ENCODE measurements at regions of chr19 and their contacts with region 1.

Region 1: DNA sequence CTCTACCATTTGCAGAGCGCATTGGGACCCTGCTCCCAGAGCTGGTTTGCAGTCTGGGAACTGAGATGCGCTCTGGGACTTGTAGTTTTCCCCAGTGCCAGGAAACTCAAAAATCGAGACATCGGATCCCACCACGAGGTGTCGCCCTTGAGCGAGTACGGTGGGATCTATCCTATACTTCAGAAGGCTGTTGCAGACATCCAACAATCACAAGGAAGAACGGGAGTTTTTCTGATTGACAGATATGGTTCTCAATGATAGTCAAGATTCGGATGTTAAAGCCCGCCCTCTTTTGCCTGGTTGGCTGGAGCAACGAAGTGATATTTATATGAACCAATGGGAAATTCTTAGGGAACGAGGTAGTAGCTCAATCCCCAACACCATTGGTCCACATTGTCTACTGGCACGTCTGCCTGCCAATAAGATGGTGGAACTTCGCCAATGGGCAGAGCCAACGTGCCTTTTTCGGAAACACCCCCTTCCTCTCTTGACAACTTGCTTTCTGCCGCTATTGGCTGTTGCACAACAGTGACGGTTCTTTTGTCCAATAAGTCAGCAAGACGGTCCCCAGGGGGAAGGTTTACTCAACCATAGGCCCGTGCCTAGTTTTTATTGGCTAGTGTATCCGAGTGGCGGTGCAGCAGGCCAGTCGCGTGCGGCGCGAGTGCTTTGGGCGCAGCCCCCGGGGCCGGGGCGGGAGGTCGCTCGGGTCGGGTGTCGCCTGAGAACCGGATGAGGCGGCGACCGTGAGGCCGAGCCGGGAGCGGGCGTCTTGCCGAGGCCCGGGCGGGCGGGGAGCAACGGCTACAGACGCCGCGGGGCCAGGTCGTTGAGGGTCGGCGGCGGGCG is at the start of gene DNM2:
- DNase-seq: peak; percentile 99
- ATAC-seq: peak; percentile 94
- H3K4me3 ChIP-seq: peak within 1 kb of the TSS; percentile 96
- H3K27ac ChIP-seq: peak within 1 kb of the TSS; percentile 96
- H3K4me1 ChIP-seq: peaks cover 28% of the 10 kb centered on the region
- H3K27me3 ChIP-seq: no peaks in the 10 kb centered on the region
- CTCF ChIP-seq: peak; percentile 86
- total RNA-seq, gene DNM2: 280 TPM

Region 2: DNA sequence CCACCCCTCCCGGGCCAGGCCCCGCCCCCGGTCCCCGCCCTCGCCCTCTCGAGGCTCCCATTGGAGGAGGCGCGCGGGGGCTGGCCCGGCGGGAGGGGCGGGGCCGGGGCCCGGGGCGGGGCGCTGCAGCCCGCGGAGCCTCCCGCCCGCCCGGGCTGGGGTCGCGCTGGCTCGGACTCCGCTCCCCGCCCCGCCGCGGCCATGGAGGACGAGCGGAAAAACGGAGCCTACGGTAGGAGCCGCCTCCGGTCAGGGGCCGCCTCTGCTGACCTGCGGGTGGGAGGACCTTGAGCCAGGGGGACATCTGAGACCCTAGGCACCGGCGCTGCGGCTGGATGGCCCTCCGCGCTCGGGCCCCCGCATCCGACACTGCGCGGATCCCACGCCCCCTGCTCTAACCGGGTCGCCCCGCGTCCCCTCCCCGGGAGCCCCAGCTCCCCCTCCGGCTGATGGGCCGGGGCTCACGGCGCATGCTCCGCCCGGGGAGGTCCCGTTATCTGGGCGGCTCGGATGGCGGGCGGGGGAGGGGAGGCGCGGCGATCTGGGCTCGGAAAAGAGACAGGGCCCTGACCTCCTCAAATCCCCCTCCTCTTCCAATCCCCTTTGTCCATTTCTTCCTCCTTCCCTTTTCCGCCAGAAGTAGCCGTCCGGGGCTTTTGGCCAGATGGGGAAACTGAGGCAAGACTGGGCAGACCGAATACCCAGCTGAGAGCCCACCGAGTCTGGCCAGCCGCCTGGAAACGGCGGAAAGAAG is 115.1 kb before region 1 on chr19:
- intact Hi-C with region 1: no loop called
- DNase-seq: peak; percentile 93
- ATAC-seq: peak; percentile 97
- H3K4me3 ChIP-seq: peak overlapping the region; percentile 96
- H3K27ac ChIP-seq: peak overlapping the region; percentile 95
- H3K4me1 ChIP-seq: peaks cover 35% of the 10 kb centered on the region
- H3K27me3 ChIP-seq: no peaks in the 10 kb centered on the region
- CTCF ChIP-seq: no peak

Region 3: GRCh38 chr19:10653715-10654492 is 63.7 kb before region 1 on chr19 and contains the start of gene ILF3:
- intact Hi-C with region 1: no loop called
- DNase-seq: peak; percentile 99
- ATAC-seq: peak; percentile 94
- H3K4me3 ChIP-seq: peak within 1 kb of the TSS; percentile 93
- H3K27ac ChIP-seq: peak within 1 kb of the TSS; percentile 99
- H3K4me1 ChIP-seq: peaks cover 27% of the 10 kb centered on the region
- H3K27me3 ChIP-seq: no peaks in the 10 kb centered on the region
- CTCF ChIP-seq: no peak
- total RNA-seq, gene ILF3: 182 TPM

Region 4: GRCh38 chr19:10769533-10770491 is 52.2 kb after region 1 on chr19:
- intact Hi-C with region 1: loop called (anchors 10 kb)
- DNase-seq: no peak
- ATAC-seq: peak; percentile 64
- H3K4me3 ChIP-seq: no peak overlapping the region
- H3K27ac ChIP-seq: peak overlapping the region; percentile 55
- H3K4me1 ChIP-seq: peaks cover 52% of the 10 kb centered on the region
- H3K27me3 ChIP-seq: no peaks in the 10 kb centered on the region
- CTCF ChIP-seq: peak; percentile 24

Measured in upper lobe of right lung (tissue), 1 donor.